ENCODE measurements at regions of chr5 and their contacts with region 1.

Region 1: GRCh38 chr5:57221049-57221568 is 47.2 kb downstream of the GPBP1 start:
- DNase-seq: peak; percentile 76 to 90 (median 82)
- H3K4me3 ChIP-seq: no peak overlapping the region
- H3K27ac ChIP-seq: no peak overlapping the region
- H3K4me1 ChIP-seq: no peaks in the 10 kb centered on the region
- H3K27me3 ChIP-seq: no peaks in the 10 kb centered on the region

Region 2: DNA sequence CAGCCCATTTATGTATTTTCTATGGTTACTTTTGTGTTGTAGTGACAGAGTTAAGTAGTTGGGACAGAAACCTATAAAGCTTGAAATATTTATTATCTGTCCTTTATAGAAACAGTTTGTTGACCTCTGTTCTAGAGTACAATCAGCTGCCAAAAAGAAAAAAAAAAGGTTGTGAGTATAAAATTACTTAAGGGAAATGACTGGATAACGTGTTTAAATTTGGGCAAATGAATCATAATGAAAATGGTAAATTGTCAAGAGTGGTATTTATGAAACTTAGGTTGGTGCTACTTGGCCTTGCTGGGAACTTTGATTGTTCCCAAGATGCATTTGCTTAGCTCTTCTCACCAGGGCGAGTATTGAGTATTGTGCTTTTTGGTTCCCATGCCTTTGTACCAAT is 1156.1 kb before region 1 on chr5:
- CTCF ChIA-PET with region 1: no interaction called
- POLR2A ChIA-PET with region 1: no interaction called
- DNase-seq: no peak
- H3K4me3 ChIP-seq: no peak overlapping the region
- H3K27ac ChIP-seq: no peak overlapping the region
- H3K4me1 ChIP-seq: no peaks in the 10 kb centered on the region
- H3K27me3 ChIP-seq: peaks cover 0 to 17% (median 12%) of the 10 kb centered on the region in 5 experiments

Region 3: DNA sequence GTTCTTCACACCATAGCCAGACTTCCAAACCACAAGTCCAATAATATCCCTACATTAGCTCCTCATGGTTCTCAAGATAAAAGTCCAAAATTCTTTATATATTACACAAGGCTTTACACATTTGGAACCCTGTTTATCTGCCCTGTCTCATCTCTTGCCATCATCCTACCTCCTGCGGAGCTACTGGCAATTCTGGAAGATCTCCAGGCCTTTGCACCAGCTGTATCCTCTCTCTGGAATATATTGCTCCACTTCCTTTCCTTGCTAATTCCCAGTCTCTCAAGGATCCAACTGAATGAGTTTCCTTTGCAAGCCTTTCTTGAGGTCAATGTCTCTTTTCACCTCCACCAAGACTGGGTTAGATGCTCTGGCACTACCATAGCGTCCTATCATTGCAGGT is 227.9 kb before region 1 on chr5:
- CTCF ChIA-PET with region 1: no interaction called
- POLR2A ChIA-PET with region 1: no interaction called
- DNase-seq: no peak
- H3K4me3 ChIP-seq: no peak overlapping the region
- H3K27ac ChIP-seq: no peak overlapping the region
- H3K4me1 ChIP-seq: no peaks in the 10 kb centered on the region
- H3K27me3 ChIP-seq: no peaks in the 10 kb centered on the region

Region 4: DNA sequence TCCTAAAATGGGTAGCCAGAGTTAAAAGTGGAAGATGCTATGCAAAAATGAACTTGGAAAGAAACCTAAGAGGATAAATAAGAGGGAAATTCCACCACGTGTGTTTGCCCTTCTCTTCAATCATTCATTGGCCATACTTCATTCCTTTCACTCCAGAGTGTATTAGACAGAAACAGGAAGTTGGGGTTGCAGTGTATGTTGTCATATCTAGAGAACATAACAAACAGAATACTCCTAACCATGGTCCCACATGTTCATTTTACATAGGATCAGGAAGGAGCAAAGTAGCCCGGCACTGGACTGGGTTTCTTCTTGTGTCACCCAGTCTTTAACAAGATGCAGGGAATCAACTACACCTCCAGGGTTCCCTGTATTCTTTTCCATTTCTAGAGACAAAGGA is 54.8 kb before region 1 on chr5:
- CTCF ChIA-PET with region 1: no interaction called
- POLR2A ChIA-PET with region 1: no interaction called
- DNase-seq: peak in 2 of 3 donors; percentile 60 to 67
- H3K4me3 ChIP-seq: no peak overlapping the region
- H3K27ac ChIP-seq: no peak overlapping the region
- H3K4me1 ChIP-seq: peaks cover 0 to 8% (median 2%) of the 10 kb centered on the region in 4 experiments
- H3K27me3 ChIP-seq: no peaks in the 10 kb centered on the region

Region 5: GRCh38 chr5:57231607-57232006 is 10.5 kb after region 1 on chr5:
- CTCF ChIA-PET with region 1: interaction called, 13 read pairs
- POLR2A ChIA-PET with region 1: no interaction called
- DNase-seq: no peak
- H3K4me3 ChIP-seq: no peak overlapping the region
- H3K27ac ChIP-seq: no peak overlapping the region
- H3K4me1 ChIP-seq: no peaks in the 10 kb centered on the region
- H3K27me3 ChIP-seq: no peaks in the 10 kb centered on the region

Measured in common myeloid progenitor, CD34-positive (primary cell).